ENCODE measurements at regions of chr17 and their contacts with region 1.

Region 1: DNA sequence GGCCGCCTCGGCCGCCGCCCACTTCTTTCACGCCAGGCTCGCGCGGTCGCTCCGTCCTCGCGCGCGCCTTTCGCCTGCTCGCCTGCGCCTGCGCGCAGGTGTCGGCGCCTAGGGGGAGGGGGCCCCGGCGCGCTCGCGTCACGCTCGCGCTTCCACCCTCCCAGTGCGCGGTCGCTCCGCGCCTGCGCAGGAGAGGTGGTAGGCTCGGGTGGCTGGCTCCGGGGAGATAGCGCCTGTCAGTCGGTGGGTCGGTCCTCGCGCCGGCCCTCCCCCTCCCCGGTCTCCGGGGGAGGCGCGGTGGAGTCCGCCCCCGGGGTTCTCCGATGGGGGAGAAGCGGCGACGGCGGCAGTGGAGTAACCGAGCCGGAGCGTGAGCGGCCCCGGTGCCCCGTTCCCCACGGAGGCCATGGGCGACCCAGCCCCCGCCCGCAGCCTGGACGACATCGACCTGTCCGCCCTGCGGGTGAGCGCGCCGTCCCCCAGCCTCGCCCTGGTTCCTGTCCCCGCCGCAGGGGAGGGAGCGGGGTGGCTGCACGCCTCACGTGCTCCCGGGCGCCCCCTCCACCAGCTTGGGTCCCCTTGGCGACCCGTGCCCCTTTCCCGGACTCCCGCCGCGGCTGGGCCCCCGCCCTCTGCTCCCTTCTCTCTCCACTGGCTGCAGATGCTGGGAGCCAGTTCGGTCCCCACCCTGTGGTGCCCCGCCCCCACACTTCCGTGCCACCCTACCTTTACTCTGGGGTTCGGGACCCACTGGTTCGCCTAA is at the start of gene MINK1:
- DNase-seq: peak; percentile 92
- ATAC-seq: peak; percentile 93
- H3K4me3 Mint-ChIP-seq: peak within 1 kb of the TSS; percentile 90
- H3K27ac Mint-ChIP-seq: peak within 1 kb of the TSS; percentile 91
- H3K4me1 Mint-ChIP-seq: peaks cover 28% of the 10 kb centered on the region
- H3K27me3 Mint-ChIP-seq: no peaks in the 10 kb centered on the region
- total RNA-seq, gene MINK1: 48.2 to 57.7 TPM

Region 2: DNA sequence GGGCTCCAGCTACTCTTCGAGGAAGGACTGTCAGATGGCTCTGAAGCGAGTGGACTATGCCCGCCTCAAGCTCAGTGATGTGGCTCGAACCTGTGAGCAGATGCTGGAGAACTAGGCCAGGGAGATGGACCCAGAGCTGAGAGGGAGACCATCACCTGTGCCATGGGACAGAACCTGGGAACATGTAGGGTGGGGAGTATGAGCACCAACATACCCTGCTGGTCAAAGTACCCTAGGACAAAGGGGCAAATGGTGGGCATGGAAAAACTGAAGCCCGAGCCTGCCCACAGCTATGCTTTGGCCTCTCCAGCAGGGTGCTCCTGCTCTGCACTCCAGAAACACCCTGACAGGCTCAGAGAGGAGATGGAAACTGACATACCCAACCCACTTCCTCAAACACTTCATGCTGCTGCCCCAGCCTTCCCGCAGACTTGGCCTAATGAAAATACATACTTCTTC is 100.3 kb before region 1 on chr17:
- CTCF ChIA-PET with region 1: no interaction called
- POLR2A ChIA-PET with region 1: no interaction called
- intact Hi-C with region 1: loop called in 1 of 2 experiments (anchors 1 kb)
- DNase-seq: no peak
- ATAC-seq: no peak
- H3K4me3 Mint-ChIP-seq: no peak overlapping the region
- H3K27ac Mint-ChIP-seq: peak overlapping the region; percentile 17
- H3K4me1 Mint-ChIP-seq: peaks cover 39% of the 10 kb centered on the region
- H3K27me3 Mint-ChIP-seq: peaks cover under 1% of the 10 kb centered on the region

Region 3: DNA sequence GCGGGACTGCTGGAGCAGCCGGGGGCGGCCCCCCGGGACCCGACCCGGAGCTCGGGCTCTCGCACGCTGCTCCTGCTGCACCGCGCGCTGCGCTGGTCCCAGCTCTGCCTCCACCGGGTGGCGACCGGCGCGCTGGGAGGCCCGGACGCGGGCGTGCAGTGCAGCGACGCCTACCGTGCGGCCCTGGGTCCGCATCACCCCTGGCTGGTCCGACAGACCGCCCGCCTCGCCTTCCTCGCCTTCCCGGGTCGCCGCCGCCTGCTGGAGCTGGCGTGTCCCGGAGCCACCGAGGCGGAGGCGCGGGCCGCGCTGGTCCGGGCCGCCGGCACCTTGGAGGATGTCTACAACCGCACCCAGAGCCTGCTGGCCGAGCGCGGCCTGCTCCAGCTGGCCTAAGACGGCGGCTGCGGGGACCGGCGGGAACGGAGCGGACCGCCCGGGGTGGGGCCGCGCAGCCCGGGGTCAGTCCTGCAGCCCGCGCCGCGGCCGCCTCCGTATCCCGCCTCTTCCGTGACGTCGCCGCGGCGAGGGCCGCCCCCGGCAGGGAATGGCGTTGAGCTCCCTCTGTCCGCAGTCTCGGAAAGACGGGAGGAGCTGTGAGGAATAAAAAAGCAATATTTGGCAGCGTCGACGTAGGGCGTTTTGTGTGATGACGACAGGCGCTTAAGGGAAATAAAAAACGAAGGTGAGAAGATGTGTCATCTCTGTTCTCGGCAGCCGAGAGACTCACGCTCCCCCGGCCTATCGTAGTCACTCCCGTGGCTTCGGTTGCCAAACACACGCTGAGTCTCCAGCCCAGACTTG is 43.3 kb before region 1 on chr17:
- CTCF ChIA-PET with region 1: no interaction called
- POLR2A ChIA-PET with region 1: no interaction called
- intact Hi-C with region 1: loop called (anchors 1 kb)
- DNase-seq: peak; percentile 92
- ATAC-seq: peak; percentile 91
- H3K4me3 Mint-ChIP-seq: peak overlapping the region; percentile 64
- H3K27ac Mint-ChIP-seq: peak overlapping the region; percentile 93
- H3K4me1 Mint-ChIP-seq: peaks cover 25% of the 10 kb centered on the region
- H3K27me3 Mint-ChIP-seq: peaks cover 34% of the 10 kb centered on the region

Region 4: GRCh38 chr17:4806777-4807604 is 26.4 kb before region 1 on chr17 and contains the start of gene PLD2:
- CTCF ChIA-PET with region 1: no interaction called
- POLR2A ChIA-PET with region 1: no interaction called
- intact Hi-C with region 1: loop called in 1 of 2 experiments (anchors 1 kb)
- DNase-seq: peak; percentile 93
- ATAC-seq: peak; percentile 98
- H3K4me3 Mint-ChIP-seq: peak within 1 kb of the TSS; percentile 73
- H3K27ac Mint-ChIP-seq: no peak within 1 kb of the TSS
- H3K4me1 Mint-ChIP-seq: peaks cover 7% of the 10 kb centered on the region
- H3K27me3 Mint-ChIP-seq: no peaks in the 10 kb centered on the region
- total RNA-seq, gene PLD2: 12.3 to 14.1 TPM

Region 5: DNA sequence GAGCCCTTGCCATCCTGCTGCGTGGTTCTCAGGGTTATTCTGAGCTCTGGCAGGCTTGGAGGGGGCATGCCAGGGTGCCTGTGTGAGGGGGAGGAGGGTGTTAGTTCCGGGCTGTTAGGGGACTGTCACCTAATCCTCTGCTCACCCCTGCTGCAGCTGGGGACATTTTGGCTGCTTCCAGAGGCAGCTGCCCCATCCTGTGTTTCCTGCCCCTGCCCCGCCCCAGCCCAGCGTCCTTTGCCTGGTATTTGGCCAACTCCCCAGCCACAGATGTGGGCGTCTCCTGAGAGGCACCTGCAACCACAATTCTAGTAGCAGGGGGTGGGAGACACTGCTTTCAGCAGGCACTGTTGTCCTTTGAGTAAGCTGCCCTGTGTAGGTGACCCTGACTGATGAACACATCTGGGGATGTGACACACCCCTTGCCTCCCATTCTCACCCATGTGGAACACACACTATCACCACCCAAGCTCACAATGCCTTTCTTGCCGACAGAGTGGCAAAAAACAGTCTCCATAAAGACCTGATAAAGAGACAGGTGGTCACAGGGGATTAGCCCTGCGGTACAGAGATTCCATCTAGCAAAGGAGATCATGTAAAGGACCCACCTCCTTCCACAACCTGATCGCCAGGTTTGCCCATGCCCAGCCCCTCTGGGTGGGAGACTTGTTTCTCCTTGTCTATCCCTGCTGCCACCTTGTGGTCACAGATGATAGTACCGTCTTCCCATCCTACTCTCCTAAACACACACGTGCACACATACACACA is 69.9 kb after region 1 on chr17 and contains the start of gene CHRNE:
- CTCF ChIA-PET with region 1: no interaction called
- POLR2A ChIA-PET with region 1: interaction called, 3 read pairs
- intact Hi-C with region 1: loop called in 1 of 2 experiments (anchors 1 kb)
- DNase-seq: peak; percentile 89
- ATAC-seq: peak; percentile 44
- H3K4me3 Mint-ChIP-seq: peak within 1 kb of the TSS; percentile 65
- H3K27ac Mint-ChIP-seq: peak within 1 kb of the TSS; percentile 72
- H3K4me1 Mint-ChIP-seq: peaks cover 26% of the 10 kb centered on the region
- H3K27me3 Mint-ChIP-seq: no peaks in the 10 kb centered on the region
- total RNA-seq, gene CHRNE: 0.59 to 0.84 TPM